Adrenal gland (tissue), 19 donors: ENCODE measurements at regions of chr15 and their contacts with region 1.

Region 1: DNA sequence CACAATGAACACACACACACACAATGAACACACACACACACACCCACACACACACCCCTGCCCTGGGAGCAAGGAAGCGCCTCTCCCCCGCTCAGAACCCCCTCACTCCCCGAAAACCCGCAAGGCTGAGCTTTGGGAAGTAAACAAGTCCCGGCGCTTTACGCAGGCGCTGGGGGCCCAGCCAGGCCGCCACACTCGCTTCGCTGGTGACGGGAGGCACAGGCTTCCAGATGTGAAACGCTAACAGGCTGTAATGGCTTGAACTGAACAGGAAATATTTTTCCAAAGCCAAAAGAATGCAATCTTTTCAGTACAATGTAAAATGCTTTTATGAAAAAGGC is 122.7 kb upstream of the IGF1R start:
- DNase-seq: no peak
- H3K4me3 ChIP-seq: no peak overlapping the region
- H3K27ac ChIP-seq: no peak overlapping the region
- H3K4me1 ChIP-seq: no peaks in the 10 kb centered on the region
- H3K27me3 ChIP-seq: peaks cover 4% of the 10 kb centered on the region
- CTCF ChIP-seq: no peak
- POLR2A ChIP-seq: no peak

Region 2: GRCh38 chr15:98647774-98648653 is 122.4 kb after region 1 on chr15 and contains the start of gene IGF1R:
- intact Hi-C with region 1: loop called in 1 of 2 experiments (anchors 10 kb)
- DNase-seq: peak; percentile 85 to 90 (median 87)
- H3K4me3 ChIP-seq: peak within 1 kb of the TSS in 3 of 4 donors; percentile 87 to 96 (median 94)
- H3K27ac ChIP-seq: peak within 1 kb of the TSS in 4 of 5 donors; percentile 74 to 94 (median 90)
- H3K4me1 ChIP-seq: peaks cover 0 to 20% of the 10 kb centered on the region in 2 donors
- H3K27me3 ChIP-seq: peaks cover 26% of the 10 kb centered on the region
- CTCF ChIP-seq: peak in 3 of 6 experiments; percentile 2 to 29 (median 25)
- POLR2A ChIP-seq: peak in 1 of 2 donors; percentile 83
- total RNA-seq, gene IGF1R: 44.1 to 138 (median 73.0) TPM

Region 3: GRCh38 chr15:98727115-98728085 is 201.8 kb after region 1 on chr15:
- intact Hi-C with region 1: loop called in 1 of 2 experiments (anchors 10 kb)
- DNase-seq: peak; percentile 86 to 98 (median 94)
- H3K4me3 ChIP-seq: no peak overlapping the region
- H3K27ac ChIP-seq: peak overlapping the region; percentile 54 to 95 (median 84)
- H3K4me1 ChIP-seq: peaks cover 28 to 53% of the 10 kb centered on the region in 2 donors
- H3K27me3 ChIP-seq: no peaks in the 10 kb centered on the region
- CTCF ChIP-seq: no peak
- POLR2A ChIP-seq: peak in 1 of 2 donors; percentile 64

Region 4: DNA sequence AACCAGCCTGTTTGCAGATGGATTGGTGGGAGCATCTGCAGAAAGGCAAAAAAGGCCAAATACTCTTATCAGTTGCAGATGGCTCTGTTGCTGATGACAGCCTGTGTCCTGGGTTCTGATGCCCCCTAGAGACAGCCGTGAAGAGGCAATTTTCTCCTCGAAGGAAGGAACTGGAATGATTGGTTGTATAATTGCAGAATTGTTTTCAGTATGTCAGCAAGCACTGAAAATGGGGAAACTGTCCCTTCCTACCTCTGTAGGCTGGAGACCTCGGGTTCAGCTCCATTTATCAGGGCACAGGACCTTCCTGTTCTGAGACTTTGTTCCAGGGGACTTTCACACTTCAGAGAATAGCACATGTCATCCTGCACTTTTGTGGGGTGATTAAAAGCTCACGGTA is 378.9 kb after region 1 on chr15:
- intact Hi-C with region 1: loop called in 1 of 2 experiments (anchors 10 kb)
- DNase-seq: peak; percentile 46 to 70 (median 55)
- H3K4me3 ChIP-seq: no peak overlapping the region
- H3K27ac ChIP-seq: peak overlapping the region in 1 of 5 donors; percentile 52
- H3K4me1 ChIP-seq: peaks cover 0 to 20% of the 10 kb centered on the region in 2 donors
- H3K27me3 ChIP-seq: no peaks in the 10 kb centered on the region
- CTCF ChIP-seq: peak; percentile 34 to 58 (median 56)
- POLR2A ChIP-seq: no peak

Region 5: DNA sequence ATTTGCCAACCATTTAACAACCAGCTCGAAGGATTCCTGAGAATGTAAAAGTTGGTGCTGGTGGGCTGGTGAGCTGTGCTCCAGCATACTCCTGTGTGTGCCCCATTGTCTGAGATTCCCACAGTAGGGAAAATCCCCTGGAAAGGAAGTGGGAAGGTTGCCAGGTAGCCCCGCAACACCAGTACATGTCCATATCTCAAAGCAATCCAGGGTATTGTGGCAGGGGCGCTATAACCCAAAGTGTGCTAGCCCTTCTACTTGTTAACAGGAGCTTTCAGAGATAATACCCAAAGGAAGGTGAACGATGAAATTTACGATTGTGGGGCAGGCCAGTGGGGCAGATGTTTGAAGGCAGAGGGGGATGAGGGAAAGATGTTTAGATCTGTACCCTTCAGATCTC is 536.6 kb after region 1 on chr15:
- intact Hi-C with region 1: loop called in 1 of 2 experiments (anchors 5 kb)
- DNase-seq: no peak
- H3K4me3 ChIP-seq: no peak overlapping the region
- H3K27ac ChIP-seq: no peak overlapping the region
- H3K4me1 ChIP-seq: peaks cover 5 to 7% of the 10 kb centered on the region in 2 donors
- H3K27me3 ChIP-seq: no peaks in the 10 kb centered on the region
- CTCF ChIP-seq: no peak
- POLR2A ChIP-seq: no peak